ENCODE measurements at regions of chr2 and their contacts with region 1.

Region 1: GRCh38 chr2:155382776-155383175 is 684.3 kb downstream of the KCNJ3 start:
- DNase-seq: no peak
- H3K4me3 ChIP-seq: no peak overlapping the region
- H3K27ac ChIP-seq: no peak overlapping the region
- H3K4me1 ChIP-seq: no peaks in the 10 kb centered on the region
- H3K27me3 ChIP-seq: no peaks in the 10 kb centered on the region

Region 2: DNA sequence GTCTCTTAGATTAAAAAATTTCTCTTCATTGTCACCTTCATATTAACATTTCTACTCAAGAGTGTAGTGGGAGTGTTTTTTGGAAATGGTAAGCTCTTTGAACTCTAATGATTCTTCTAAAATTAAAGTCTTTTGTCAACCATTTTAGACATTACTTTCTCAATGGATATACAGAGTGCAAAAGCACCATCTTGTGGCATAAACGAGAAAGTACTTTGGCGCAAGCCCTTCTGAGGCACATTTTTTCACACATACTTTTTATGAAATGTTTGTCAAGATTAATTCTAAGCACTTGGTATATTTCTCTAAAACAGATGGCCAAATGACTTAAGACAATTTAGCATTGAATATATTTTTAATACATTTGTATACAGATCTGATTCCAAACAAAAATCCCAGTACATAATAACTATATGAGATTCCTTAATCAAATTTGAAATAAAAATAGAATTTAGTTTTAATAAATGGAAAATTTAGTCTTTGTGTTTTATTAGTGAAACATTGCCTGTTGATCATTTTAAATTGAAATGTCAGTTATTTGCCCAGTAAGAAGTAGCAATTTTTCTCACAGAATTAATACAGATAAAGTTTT is 1811.4 kb after region 1 on chr2:
- in situ Hi-C with region 1: loop called (anchors 10 kb)
- DNase-seq: peak; percentile 80
- H3K4me3 ChIP-seq: no peak overlapping the region
- H3K27ac ChIP-seq: no peak overlapping the region
- H3K4me1 ChIP-seq: peaks cover 35% of the 10 kb centered on the region
- H3K27me3 ChIP-seq: no peaks in the 10 kb centered on the region